PC-3 (cell line): ENCODE measurements at regions of chr22 and their contacts with region 1.

Region 1: GRCh38 chr22:25207005-25207404 is 7.3 kb downstream of the CRYBB3 start:
- DNase-seq: no peak
- ATAC-seq: no peak
- H3K4me3 ChIP-seq: no peak overlapping the region
- H3K27ac ChIP-seq: no peak overlapping the region
- H3K4me1 ChIP-seq: no peaks in the 10 kb centered on the region
- H3K27me3 ChIP-seq: no peaks in the 10 kb centered on the region
- CTCF ChIP-seq: no peak

Region 2: GRCh38 chr22:25048659-25049647 is 158.1 kb before region 1 on chr22:
- CTCF ChIA-PET with region 1: no interaction called
- POLR2A ChIA-PET with region 1: no interaction called
- intact Hi-C with region 1: no loop called
- DNase-seq: peak; percentile 64
- ATAC-seq: peak; percentile 76
- H3K4me3 ChIP-seq: no peak overlapping the region
- H3K27ac ChIP-seq: no peak overlapping the region
- H3K4me1 ChIP-seq: peaks cover 5% of the 10 kb centered on the region
- H3K27me3 ChIP-seq: no peaks in the 10 kb centered on the region
- CTCF ChIP-seq: peak; percentile 81

Region 3: DNA sequence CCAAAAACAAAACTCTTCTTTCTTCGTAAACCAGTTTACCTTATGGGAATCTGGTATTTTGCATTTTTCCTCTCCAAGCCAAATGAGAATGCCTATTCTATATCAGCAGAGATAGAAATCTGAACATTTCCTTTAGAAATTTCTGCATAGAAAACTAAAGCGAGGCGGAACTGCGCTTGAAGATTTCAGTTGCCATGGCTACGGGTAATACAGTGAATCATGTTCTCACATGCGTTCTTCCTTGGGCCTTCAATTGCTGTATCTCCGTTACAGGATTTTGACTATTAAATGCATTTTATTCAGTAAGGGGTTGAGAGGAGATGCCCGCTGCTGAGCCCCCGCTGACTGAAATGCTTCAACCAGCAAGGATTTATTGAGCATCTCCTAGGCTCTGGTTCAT is 115.5 kb before region 1 on chr22:
- CTCF ChIA-PET with region 1: no interaction called
- POLR2A ChIA-PET with region 1: no interaction called
- intact Hi-C with region 1: no loop called
- DNase-seq: no peak
- ATAC-seq: no peak
- H3K4me3 ChIP-seq: no peak overlapping the region
- H3K27ac ChIP-seq: no peak overlapping the region
- H3K4me1 ChIP-seq: no peaks in the 10 kb centered on the region
- H3K27me3 ChIP-seq: no peaks in the 10 kb centered on the region
- CTCF ChIP-seq: no peak

Region 4: GRCh38 chr22:25219948-25220442 is 13.0 kb after region 1 on chr22:
- CTCF ChIA-PET with region 1: no interaction called
- POLR2A ChIA-PET with region 1: interaction called, 11 read pairs
- intact Hi-C with region 1: no loop called
- DNase-seq: peak; percentile 6
- ATAC-seq: no peak
- H3K4me3 ChIP-seq: no peak overlapping the region
- H3K27ac ChIP-seq: no peak overlapping the region
- H3K4me1 ChIP-seq: no peaks in the 10 kb centered on the region
- H3K27me3 ChIP-seq: no peaks in the 10 kb centered on the region
- CTCF ChIP-seq: no peak